Activated CD4-positive, alpha-beta T cell treated with anti-CD3 and anti-CD28 coated beads for 36 hours (primary cell): ENCODE measurements at regions of chr6 and their contacts with region 1.

Region 1: DNA sequence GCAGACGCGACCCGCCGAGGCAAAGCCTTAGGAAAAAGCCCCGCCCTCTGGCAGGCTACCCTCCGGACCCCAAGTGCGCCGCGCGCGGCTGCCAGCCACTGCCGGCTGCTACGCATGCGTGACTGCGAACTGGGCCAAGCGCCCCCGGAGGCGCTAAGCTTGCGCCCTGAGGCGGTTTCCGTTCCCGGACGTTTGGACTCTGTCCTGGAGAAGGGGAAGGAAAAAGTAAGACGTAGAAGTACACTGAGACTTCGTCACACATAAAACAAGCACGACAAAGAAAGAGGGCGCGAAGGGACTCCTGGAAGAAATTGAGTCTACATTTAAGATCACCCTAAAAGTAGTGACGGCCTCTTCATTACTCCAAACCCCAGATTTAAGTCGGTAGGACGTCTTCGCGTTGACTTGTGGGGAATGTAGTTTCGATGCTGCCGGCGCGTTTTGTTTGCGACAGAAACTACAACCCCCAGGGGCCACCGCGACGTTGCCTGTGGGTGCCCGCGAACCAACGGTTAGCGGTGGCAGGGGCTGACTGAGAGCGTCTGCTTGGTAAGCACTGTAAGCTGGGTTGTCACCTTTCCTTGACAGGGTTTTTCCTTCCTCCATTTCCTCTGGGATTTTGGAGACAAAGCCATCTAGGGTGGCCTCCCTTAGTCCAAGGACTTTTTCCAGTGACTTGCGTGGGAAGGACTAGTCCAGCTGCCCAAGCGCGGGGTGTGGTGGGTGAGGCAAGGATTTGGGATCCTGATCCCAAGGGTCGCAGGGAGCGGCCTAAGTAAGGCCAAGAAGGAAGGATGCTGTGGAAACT is at the start of gene CEP57L1:
- DNase-seq: peak; percentile 97
- ATAC-seq: peak; percentile 79
- H3K4me3 Mint-ChIP-seq: peak within 1 kb of the TSS; percentile 91
- H3K27ac Mint-ChIP-seq: peak within 1 kb of the TSS; percentile 99
- H3K4me1 Mint-ChIP-seq: peaks cover 46% of the 10 kb centered on the region
- H3K27me3 Mint-ChIP-seq: no peaks in the 10 kb centered on the region
- total RNA-seq, gene CEP57L1: 23.8 to 36.9 TPM

Region 2: GRCh38 chr6:108074359-108075144 is 1020.7 kb before region 1 on chr6 and contains the start of gene OSTM1:
- CTCF ChIA-PET with region 1: no interaction called
- POLR2A ChIA-PET with region 1: no interaction called
- intact Hi-C with region 1: loop called in 1 of 2 experiments (anchors 1 kb)
- DNase-seq: peak; percentile 96
- ATAC-seq: peak; percentile 98
- H3K4me3 Mint-ChIP-seq: peak within 1 kb of the TSS; percentile 76
- H3K27ac Mint-ChIP-seq: peak within 1 kb of the TSS; percentile 80
- H3K4me1 Mint-ChIP-seq: peaks cover 19% of the 10 kb centered on the region
- H3K27me3 Mint-ChIP-seq: peaks cover 3% of the 10 kb centered on the region
- total RNA-seq, gene OSTM1: 5.5 to 7.3 TPM

Region 3: DNA sequence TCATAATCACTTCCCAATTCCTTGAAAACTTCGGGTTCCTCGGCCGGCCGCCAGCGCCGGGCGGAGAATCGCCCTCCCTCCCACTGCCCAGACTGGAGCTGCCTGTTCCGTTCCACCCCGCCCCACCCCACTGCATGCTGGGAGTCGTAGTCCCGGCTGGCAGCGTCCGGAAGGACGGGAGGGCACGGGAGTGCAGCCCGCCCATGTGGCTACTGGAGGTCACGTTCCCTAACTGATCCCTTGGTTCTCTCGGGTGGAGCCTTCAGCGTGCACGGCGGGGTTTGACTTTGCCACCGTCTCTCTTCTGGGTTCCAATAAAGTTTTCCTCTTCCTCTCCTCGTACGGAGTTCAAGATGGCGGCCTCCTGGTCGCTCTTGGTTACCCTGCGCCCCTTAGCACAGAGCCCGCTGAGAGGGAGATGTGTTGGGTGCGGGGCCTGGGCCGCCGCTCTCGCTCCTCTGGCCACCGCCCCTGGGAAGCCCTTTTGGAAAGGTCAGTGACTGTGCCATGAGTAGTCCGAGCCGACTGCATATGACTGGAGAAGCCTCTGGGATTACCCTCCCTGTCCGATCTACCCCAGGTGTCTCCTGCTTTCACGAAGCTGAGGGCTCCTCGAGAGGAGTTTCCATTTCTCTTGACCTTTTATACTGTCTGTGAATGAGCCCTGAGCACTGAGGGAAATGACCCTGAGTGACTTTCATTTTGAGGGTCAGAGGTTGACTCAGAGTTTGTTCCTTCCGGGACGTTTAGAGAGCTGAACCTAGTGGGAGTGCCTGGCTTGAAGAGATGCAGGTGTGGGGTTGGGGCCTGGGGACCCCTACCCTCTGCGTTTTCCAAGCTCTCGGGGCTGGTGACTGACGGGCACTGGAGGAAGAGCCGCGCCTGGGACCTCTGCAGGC is 800.3 kb before region 1 on chr6 and contains the start of gene AFG1L:
- CTCF ChIA-PET with region 1: no interaction called
- POLR2A ChIA-PET with region 1: no interaction called
- intact Hi-C with region 1: loop called in 1 of 2 experiments (anchors 1 kb)
- DNase-seq: peak; percentile 93
- ATAC-seq: peak; percentile 92
- H3K4me3 Mint-ChIP-seq: peak within 1 kb of the TSS; percentile 99
- H3K27ac Mint-ChIP-seq: peak within 1 kb of the TSS; percentile 100
- H3K4me1 Mint-ChIP-seq: peaks cover 13% of the 10 kb centered on the region
- H3K27me3 Mint-ChIP-seq: no peaks in the 10 kb centered on the region
- total RNA-seq, gene AFG1L: 6.6 TPM

Region 4: DNA sequence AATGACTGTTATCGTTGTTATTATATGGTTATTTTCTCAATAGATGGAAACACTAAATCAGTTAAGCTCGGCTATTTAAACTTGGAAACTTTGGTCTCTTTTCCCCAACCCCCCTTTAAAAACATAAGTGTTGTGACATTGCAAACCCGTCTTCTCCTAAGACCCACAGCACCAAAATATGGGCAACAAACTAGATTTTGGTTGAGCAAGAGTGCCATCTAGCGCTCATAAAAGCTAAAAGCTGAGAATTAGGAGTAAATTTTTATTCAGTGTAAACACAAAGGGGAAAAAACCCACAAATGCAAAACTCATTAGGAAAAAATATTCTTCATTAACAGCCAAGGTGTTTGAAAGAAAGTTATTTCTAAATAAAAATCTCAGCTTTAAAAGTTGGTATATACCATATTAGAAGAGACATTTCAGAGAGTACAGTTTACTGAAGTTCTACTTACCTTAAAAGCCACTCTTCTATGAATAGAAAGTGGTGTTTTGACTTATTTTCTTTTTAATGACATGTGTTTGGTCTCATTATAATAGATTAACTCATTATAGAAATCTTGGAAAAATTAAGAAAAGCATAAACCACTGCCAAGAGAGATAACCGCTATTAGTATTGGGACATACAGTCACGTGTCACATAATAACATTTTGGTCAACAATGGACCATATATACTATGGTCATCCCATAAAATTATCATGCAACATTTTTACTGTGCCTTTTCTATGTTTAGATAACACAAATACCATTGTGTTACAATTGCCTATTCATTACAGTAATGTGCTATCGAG is 21.7 kb before region 1 on chr6:
- CTCF ChIA-PET with region 1: interaction called, 12 read pairs
- POLR2A ChIA-PET with region 1: no interaction called
- intact Hi-C with region 1: no loop called
- DNase-seq: peak; percentile 55
- ATAC-seq: peak; percentile 66
- H3K4me3 Mint-ChIP-seq: no peak overlapping the region
- H3K27ac Mint-ChIP-seq: no peak overlapping the region
- H3K4me1 Mint-ChIP-seq: peaks cover 19% of the 10 kb centered on the region
- H3K27me3 Mint-ChIP-seq: no peaks in the 10 kb centered on the region

Region 5: DNA sequence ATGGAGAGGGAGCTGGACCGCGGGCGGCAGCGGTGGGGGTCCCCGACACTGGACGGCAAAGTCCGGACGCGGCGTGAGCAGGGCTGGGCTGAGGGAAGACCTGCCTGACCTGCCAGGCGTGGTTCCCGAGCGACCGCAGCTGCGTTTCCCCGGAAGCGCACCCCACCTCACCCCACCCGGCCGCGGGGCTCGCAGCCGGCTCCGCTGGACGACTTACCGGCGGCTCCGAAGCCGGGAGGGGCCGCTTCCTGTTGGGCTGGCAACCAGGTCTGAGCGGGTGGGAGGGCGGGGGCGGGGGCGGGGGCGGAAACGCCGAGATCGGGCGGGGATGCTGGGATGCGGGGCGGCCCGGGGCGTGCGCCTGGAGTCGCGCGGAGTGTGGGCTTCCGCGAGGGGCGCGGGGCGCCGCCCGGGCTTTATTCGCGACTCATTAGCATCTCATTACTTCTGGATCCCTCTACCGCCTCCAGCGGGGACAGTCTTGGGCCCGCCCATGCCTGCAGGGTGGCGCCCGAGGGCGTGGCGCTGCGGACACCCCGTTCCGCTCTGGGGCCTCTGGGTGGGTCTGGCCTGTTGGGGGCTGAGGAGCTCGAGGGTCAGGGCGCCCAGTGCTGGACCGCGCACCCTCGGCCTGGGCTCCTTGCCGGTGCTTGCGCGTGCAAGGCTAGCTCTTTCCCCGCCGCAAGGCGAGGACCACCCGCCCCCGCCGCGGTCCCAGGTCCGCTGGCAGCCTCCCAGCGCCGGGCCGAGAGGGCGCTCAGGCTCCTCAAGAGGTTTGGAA is 360.5 kb after region 1 on chr6 and contains the start of gene MICAL1:
- CTCF ChIA-PET with region 1: no interaction called
- POLR2A ChIA-PET with region 1: no interaction called
- intact Hi-C with region 1: loop called in 1 of 2 experiments (anchors 2 kb)
- DNase-seq: peak; percentile 78
- ATAC-seq: peak; percentile 53
- H3K4me3 Mint-ChIP-seq: peak within 1 kb of the TSS; percentile 87
- H3K27ac Mint-ChIP-seq: peak within 1 kb of the TSS; percentile 92
- H3K4me1 Mint-ChIP-seq: peaks cover 58% of the 10 kb centered on the region
- H3K27me3 Mint-ChIP-seq: no peaks in the 10 kb centered on the region
- total RNA-seq, gene MICAL1: 25.1 to 26.3 TPM

Region 6: GRCh38 chr6:110179401-110180227 is 1084.4 kb after region 1 on chr6 and contains the start of gene WASF1:
- CTCF ChIA-PET with region 1: no interaction called
- POLR2A ChIA-PET with region 1: no interaction called
- intact Hi-C with region 1: loop called in 1 of 2 experiments (anchors 1 kb)
- DNase-seq: peak; percentile 94
- ATAC-seq: peak; percentile 89
- H3K4me3 Mint-ChIP-seq: no peak within 1 kb of the TSS
- H3K27ac Mint-ChIP-seq: peak within 1 kb of the TSS; percentile 7
- H3K4me1 Mint-ChIP-seq: peaks cover 5% of the 10 kb centered on the region
- H3K27me3 Mint-ChIP-seq: peaks cover 10% of the 10 kb centered on the region
- total RNA-seq, gene WASF1: 4.2 to 4.6 TPM